ENCODE measurements at regions of chr7 and their contacts with region 1.

Region 1: DNA sequence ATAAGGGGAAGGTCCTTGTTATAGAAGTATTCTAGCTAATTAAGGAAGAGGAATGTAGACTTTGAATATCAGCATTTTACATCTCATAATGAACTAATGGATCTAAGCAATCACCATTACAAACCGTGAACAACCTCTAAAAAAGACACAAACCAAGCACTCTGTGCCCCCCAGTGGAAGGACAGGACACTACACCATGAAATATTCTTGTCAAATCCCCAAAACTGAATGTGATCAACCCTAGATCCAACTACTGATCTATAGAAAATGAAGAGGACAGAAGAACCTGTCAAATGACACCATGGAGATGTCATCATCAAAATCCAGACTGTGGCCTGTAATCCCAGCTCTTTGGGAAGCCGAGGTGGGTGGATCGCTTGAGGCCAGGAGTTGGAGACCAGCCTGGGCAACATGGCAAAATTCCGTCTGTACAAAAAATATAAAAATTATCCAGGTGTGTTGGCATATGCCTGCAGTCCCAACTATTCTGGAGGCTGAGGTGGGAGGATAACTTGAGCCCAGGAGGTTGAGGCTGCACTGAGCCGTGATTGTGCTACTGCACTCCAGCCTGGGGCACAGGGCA is 111.3 kb upstream of the CARD11 start:
- DNase-seq: no peak
- H3K4me3 ChIP-seq: no peak overlapping the region
- H3K27ac ChIP-seq: no peak overlapping the region
- H3K4me1 ChIP-seq: no peaks in the 10 kb centered on the region
- H3K27me3 ChIP-seq: peaks cover 0 to 9% of the 10 kb centered on the region in 2 donors
- CTCF ChIP-seq: peak; percentile 59 to 64

Region 2: DNA sequence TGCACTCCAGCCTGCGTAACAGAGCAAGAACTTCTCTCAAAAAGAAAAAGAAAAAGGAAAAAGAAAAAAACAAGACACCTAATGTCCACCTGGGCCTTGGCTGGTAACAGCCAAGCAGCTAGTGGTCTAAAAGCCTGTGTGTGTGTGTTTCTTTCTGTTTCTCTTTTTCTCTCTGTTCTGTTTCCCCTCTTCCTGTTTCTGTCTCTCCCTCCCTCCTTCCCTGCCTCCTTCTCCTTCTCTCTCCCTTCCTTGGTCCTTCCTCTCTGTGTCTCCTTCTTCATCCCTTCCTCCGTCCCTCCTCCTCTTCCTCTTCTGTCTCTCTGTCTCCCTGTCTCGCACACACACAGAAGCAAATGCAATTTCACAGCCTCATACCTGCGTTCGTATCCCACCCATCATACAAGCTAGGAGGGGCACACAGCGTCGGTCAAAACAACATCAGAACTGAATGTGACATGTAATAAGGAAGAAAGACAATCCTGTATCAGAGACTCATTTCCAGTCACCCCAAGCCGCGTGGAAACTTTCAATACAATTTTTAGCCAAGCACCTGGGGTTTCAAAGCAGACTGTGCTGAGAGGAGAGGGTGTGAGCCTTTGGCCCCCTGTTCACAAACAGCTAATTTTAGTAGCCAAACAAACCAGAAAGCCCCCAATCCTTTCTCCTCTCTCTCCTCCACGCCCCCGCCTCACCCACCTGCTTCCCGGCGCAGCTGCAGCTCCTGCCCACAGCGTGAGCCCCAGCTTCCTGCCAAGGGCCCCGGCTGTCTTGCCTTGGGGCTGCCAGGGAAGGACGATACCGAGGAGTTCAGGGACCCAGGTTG is 260.7 kb before region 1 on chr7:
- intact Hi-C with region 1: loop called (anchors 10 kb)
- DNase-seq: no peak
- H3K4me3 ChIP-seq: no peak overlapping the region
- H3K27ac ChIP-seq: no peak overlapping the region
- H3K4me1 ChIP-seq: peaks cover 0 to 12% (median 3%) of the 10 kb centered on the region in 4 donors
- H3K27me3 ChIP-seq: peaks cover 0 to 14% of the 10 kb centered on the region in 2 donors
- CTCF ChIP-seq: no peak

Region 3: DNA sequence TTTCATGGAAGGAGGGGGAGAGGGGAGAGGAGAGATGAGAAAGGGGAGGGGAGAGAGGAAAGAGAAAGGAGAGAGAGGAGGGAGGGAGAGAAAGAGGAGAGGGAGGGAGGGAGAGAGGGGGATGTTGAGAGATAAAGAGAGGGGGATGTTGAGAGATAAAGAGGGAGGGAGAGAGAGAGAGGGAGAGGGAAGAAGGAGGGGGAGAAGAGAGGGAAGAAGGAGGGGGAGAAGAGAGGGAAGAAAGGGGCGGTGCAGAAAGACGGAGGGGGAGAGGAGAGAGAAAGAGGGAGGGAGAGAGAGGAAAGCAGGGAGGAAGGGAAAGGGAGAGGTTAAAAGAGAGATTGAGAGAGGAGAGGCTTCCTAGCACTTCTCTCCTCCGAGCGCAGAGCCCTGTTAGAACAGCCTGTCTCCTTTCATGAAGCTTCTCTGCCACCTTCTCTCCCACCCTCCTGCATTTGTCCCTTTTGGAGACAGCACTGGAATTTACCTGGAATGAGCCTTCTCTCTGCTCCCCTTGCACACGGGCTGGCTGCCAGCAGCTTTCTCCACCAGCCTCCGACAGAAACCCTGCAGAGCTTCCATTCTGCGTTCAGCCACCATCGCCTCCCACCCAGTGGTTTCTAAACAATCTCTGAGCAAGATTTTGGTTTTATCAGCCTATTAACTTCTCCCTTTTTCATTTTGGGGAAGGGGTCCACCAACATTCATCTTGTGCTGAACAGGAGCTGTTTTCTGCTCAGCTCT is 37.3 kb before region 1 on chr7:
- intact Hi-C with region 1: no loop called
- DNase-seq: no peak
- H3K4me3 ChIP-seq: no peak overlapping the region
- H3K27ac ChIP-seq: no peak overlapping the region
- H3K4me1 ChIP-seq: no peaks in the 10 kb centered on the region
- H3K27me3 ChIP-seq: peaks cover 0 to 7% of the 10 kb centered on the region in 2 donors
- CTCF ChIP-seq: no peak

Measured in tibial artery (tissue), 4 donors.